ENCODE measurements at regions of chr22 and their contacts with region 1.

Region 1: GRCh38 chr22:21760640-21761039 is 25.0 kb upstream of the YPEL1 start:
- DNase-seq: peak; percentile 84
- H3K4me3 ChIP-seq: no peak overlapping the region
- H3K27ac ChIP-seq: no peak overlapping the region
- H3K27me3 ChIP-seq: no peaks in the 10 kb centered on the region
- CTCF ChIP-seq: no peak

Region 2: GRCh38 chr22:21624120-21624879 is 136.3 kb before region 1 on chr22:
- CTCF ChIA-PET with region 1: no interaction called
- POLR2A ChIA-PET with region 1: no interaction called
- DNase-seq: no peak
- H3K4me3 ChIP-seq: no peak overlapping the region
- H3K27ac ChIP-seq: peak overlapping the region; percentile 39
- H3K27me3 ChIP-seq: no peaks in the 10 kb centered on the region
- CTCF ChIP-seq: peak; percentile 47

Region 3: DNA sequence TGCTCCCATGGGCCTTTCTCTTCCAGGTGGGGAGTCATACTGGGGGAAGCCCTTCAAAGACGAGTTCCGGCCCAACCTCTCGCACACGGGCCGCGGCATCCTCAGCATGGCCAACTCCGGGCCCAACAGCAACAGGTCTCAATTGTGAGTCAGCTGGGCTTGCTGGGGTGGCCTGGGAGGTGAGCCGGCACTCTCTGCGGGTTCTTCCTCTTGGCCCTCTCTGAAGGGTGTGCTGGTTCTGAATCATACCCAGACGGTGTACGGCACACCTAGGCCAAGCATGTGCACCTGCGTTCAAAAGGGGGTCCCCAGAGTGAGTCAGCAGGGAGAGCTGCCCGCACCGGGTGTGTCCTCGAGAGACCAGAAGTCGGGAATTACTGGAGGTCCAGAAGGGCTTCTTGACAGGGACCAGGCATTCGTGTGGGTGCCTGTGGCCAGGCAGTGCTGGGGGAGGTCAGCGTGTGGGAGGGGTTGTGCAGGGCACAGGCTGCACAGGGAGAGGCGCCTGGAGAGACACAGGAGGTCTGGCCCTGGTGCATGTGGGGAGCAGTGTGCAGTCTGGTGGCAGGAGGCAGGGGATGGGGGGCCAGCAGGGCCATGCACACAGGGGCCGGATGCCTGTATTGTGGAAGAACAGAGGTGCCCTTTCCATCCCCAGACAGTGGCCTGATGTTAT is 71.8 kb before region 1 on chr22:
- CTCF ChIA-PET with region 1: no interaction called
- POLR2A ChIA-PET with region 1: no interaction called
- DNase-seq: no peak
- H3K4me3 ChIP-seq: no peak overlapping the region
- H3K27ac ChIP-seq: no peak overlapping the region
- H3K27me3 ChIP-seq: no peaks in the 10 kb centered on the region
- CTCF ChIP-seq: no peak

Region 4: DNA sequence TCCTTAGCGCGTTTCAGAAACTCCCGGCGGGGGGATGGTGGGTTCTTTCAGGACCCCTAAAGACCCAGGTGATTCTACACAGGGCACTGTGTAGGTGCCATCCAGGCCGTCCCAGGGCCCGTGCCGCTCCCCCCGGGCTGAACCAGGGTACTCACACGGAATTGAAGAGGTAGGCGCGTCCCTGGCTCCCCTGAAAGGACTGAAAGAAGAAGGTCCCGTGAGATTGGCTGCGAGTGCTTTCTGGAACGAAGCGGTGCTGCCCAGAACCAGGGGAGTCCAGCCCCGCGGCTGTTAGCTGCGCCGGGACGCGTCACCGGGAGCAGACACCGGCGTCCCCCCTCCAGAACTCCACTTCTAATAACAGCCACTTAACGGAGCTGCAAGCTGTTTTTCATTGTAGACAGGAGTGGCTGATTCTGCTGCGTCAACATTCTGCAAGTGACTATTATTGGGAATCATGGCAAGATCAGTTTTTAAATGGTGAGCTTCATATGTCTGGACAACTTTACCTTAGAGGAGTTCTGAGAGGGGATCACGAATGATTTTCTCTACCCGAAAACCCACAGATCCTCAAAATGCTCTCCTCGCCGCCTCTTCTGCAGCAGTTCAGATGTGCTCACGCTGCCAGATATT is 56.8 kb before region 1 on chr22:
- CTCF ChIA-PET with region 1: no interaction called
- POLR2A ChIA-PET with region 1: no interaction called
- DNase-seq: no peak
- H3K4me3 ChIP-seq: no peak overlapping the region
- H3K27ac ChIP-seq: no peak overlapping the region
- H3K27me3 ChIP-seq: no peaks in the 10 kb centered on the region
- CTCF ChIP-seq: no peak

Region 5: DNA sequence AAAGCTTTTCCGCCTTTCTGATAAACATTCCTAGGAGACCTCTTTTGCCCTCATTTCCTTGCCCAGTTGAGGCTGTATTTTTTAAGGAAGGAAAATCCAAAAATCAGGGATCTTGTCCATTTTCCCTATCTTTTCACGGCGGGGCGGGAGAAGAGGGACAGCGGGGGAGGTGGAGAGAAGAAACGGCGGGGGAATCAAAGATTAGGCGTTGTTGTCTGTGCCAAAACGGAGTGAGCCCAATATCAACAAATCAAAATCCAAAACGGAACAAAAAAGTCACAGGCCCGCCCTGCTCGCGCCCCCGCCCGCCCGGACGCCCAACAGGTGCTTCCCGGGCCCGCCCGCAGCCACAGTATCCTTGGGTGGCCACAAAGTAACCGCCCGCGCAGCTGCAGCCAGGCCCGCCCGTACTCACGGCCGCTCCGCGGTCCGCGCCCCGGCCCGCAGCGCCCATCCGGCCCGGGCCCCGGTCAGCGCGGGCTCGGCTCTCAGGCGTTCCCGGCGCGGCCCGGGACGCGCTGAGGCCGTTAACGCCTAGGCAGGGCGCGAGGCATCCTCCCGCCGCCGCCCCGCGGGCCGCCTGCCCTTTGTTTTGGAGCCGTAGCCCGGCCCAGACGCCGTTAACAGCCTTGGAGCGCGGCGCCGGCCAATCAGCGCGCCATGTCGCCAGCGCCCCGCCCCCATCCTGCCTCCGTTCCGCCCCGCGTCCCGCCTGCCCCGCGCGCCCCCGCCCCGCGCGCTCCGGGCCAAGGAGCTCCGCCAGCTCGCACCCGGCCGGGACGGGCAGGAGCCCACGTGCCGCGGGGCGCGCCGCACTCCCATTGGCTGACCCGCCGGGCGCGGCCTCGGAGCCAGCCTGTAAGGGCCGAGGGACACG is 25.2 kb before region 1 on chr22 and contains the start of gene YPEL1:
- CTCF ChIA-PET with region 1: no interaction called
- POLR2A ChIA-PET with region 1: interaction called, 10 read pairs
- DNase-seq: peak; percentile 83
- H3K4me3 ChIP-seq: peak within 1 kb of the TSS; percentile 63
- H3K27ac ChIP-seq: no peak within 1 kb of the TSS
- H3K27me3 ChIP-seq: peaks cover 5% of the 10 kb centered on the region
- CTCF ChIP-seq: no peak
- polyA plus RNA-seq, gene YPEL1: 5.5 and 6.1 TPM in 2 replicates